ENCODE measurements at regions of chr22 and their contacts with region 1.

Region 1: DNA sequence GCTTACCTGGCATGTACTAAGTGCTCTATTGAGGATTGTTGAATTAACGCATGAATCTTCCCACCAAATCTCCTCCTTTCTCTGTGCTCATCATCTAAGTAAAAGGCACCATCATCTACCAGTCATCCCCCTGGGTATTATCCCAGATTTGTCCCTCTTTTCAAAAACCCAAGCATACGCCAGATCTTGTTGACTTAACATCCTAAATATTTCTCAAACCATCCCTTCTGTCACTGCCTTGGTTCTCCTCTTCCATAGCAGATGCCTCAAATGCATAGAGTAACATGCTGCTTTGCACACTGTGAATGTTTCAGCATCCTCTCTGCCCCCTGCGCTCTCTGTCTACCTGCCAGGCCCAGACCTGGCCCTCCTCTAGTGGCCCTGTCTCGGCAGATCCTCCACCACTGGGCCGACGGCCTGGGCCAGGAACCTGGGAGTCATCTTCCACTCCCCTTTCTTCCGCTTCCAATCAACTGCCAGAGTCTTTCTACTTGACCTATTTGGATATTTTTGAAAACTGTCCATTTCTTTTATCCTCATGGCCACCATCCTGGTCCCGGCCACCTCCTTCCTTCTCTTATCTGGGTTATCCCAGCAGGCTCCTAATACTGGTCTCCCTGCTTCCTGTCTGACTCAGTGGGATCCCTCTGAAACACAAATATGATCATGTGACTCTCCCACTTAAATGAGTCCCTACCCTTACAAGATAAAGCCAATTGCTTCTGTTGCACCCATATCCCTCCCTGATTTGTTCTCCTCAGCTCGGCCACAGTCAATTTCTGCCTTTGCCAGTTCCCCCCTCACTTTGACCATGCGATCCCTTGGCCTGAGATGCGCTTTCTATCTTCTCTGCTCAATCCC is 3.4 kb upstream of the TAB1 start:
- DNase-seq: peak in 1 of 2 donors; percentile 32
- ATAC-seq: no peak
- H3K4me3 ChIP-seq: no peak overlapping the region
- H3K27ac ChIP-seq: no peak overlapping the region
- H3K4me1 ChIP-seq: peaks cover 10% of the 10 kb centered on the region
- H3K27me3 ChIP-seq: no peaks in the 10 kb centered on the region
- CTCF ChIP-seq: no peak

Region 2: DNA sequence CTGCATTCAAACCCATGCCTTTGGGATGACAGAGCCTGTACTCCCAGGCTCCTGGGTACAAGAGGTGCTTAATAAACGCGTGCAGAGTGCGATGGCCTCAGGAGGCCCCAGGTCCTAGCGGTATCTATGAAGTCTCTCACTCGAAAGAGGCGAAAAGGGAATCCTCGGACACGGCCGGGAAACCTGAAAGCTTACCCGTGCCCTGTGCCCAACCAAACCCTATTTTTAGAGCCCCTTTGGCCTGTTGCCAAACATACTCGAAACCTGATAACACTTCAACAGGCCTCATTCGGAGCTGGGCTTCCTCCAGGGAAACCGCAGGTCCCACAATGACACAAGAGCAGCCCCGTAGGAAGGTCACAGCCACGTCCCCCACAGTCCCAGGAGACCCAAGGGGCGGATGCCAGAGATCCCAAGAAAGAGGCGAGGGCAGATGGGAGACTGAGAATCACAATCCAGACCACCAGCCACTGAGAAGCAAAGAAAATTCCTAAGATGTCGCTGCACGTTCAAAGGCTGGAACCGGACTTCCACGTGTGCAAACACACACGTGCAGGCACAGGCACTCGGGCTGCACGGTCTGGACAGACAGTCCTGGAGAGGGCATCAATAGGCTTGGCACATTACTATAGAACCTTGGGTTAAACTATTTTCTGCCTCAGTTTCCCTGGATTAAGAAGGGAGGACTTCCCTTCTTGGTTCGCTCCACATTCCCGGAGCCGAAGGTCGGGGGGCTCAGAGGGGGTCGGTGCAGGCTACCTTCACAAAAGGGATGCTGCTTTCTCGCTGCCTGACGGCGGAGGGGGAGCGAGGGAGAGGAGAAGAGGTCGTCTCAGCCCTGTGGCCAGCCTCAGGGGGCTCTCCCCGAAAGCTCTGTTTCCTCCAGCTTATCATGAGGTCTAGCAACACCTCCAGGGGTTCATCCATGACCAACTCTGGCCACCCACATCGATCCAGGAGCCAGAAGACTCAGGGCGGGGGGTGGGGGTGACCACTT is 159.5 kb before region 1 on chr22:
- intact Hi-C with region 1: no loop called
- DNase-seq: peak; percentile 74 to 87
- ATAC-seq: peak; percentile 53 to 75 (median 66)
- H3K4me3 ChIP-seq: peak overlapping the region; percentile 38
- H3K27ac ChIP-seq: peak overlapping the region; percentile 87
- H3K4me1 ChIP-seq: peaks cover 93% of the 10 kb centered on the region
- H3K27me3 ChIP-seq: no peaks in the 10 kb centered on the region
- CTCF ChIP-seq: no peak

Region 3: GRCh38 chr22:39343259-39344048 is 52.7 kb before region 1 on chr22:
- intact Hi-C with region 1: no loop called
- DNase-seq: peak in 1 of 2 donors; percentile 70
- ATAC-seq: peak; percentile 68 to 90 (median 86)
- H3K4me3 ChIP-seq: no peak overlapping the region
- H3K27ac ChIP-seq: no peak overlapping the region
- H3K4me1 ChIP-seq: no peaks in the 10 kb centered on the region
- H3K27me3 ChIP-seq: peaks cover 0 to 3% (median 0%) of the 10 kb centered on the region in 3 donors
- CTCF ChIP-seq: peak; percentile 67

Region 4: DNA sequence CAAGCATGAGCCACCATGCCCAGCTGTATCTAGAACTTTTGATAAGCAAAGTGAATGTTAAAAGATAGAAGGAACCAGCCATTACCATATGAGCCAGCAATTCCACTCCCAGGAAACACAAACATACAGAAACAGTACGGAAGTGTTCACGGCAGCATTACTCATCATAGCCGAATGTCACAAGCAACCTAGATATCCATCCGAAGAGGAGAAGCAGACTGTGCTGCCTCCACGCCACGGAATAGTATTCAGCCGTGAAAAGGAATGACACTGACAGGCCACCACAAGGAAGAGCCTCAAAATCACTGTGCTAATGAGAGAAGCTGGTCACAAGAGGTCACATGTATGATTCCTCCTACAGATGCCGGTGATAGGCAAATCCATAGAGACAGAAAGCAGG is 43.0 kb after region 1 on chr22:
- intact Hi-C with region 1: loop called in 1 of 2 experiments (anchors 5 kb)
- DNase-seq: no peak
- ATAC-seq: no peak
- H3K4me3 ChIP-seq: no peak overlapping the region
- H3K27ac ChIP-seq: no peak overlapping the region
- H3K4me1 ChIP-seq: peaks cover 13% of the 10 kb centered on the region
- H3K27me3 ChIP-seq: peaks cover 0 to 21% (median 0%) of the 10 kb centered on the region in 3 donors
- CTCF ChIP-seq: no peak